Sigmoid colon (tissue), 7 donors: ENCODE measurements at regions of chr12 and their contacts with region 1.

Region 1: DNA sequence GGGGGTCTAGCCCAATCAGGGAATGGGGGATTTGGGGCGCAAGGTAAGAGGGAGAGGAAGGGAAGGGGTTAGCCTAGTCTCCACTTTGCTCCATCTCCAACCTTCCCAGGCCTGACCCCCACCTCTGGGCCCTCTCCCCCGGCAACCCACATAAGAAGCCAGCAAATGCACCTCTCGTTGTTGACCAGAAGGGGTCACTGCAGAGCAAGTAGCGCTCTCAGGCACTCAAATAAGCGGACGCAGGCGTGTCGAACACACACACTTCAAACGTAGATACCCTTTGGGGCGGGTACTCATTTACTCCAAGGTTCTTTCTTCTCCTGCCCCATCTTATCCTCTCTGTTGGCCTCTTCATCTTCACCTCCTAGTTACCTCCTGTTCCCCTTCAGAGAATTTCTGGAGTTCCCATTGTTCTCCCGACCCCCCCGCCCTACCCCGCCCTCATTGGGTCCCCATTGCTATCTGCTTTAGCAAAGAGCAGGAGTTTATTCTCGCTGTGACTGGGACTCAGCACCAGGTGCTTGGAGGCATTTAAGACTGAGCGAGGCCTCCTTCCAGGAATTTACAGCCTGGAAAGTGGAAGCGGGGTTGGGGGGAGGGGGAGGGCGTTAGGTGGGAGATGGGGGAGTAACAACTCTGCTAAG is 1.5 kb upstream of the SRRM4 start:
- DNase-seq: no peak
- H3K4me3 ChIP-seq: no peak overlapping the region
- H3K27ac ChIP-seq: no peak overlapping the region
- H3K4me1 ChIP-seq: peaks cover 0 to 21% (median 19%) of the 10 kb centered on the region in 4 donors
- H3K27me3 ChIP-seq: peaks cover 23 to 55% (median 34%) of the 10 kb centered on the region in 3 donors
- CTCF ChIP-seq: peak in 3 of 4 experiments; percentile 33 to 66 (median 51)
- EP300 ChIP-seq: no peak
- POLR2A ChIP-seq: no peak

Region 2: GRCh38 chr12:119544765-119545625 is 565.1 kb after region 1 on chr12:
- intact Hi-C with region 1: loop called (anchors 2 kb)
- DNase-seq: peak; percentile 72
- H3K4me3 ChIP-seq: no peak overlapping the region
- H3K27ac ChIP-seq: no peak overlapping the region
- H3K4me1 ChIP-seq: no peaks in the 10 kb centered on the region
- H3K27me3 ChIP-seq: peaks cover 0 to 9% (median 0%) of the 10 kb centered on the region in 3 donors
- CTCF ChIP-seq: peak; percentile 57 to 86 (median 78)
- EP300 ChIP-seq: no peak
- POLR2A ChIP-seq: no peak